ENCODE measurements at regions of chr9 and their contacts with region 1.

Region 1: DNA sequence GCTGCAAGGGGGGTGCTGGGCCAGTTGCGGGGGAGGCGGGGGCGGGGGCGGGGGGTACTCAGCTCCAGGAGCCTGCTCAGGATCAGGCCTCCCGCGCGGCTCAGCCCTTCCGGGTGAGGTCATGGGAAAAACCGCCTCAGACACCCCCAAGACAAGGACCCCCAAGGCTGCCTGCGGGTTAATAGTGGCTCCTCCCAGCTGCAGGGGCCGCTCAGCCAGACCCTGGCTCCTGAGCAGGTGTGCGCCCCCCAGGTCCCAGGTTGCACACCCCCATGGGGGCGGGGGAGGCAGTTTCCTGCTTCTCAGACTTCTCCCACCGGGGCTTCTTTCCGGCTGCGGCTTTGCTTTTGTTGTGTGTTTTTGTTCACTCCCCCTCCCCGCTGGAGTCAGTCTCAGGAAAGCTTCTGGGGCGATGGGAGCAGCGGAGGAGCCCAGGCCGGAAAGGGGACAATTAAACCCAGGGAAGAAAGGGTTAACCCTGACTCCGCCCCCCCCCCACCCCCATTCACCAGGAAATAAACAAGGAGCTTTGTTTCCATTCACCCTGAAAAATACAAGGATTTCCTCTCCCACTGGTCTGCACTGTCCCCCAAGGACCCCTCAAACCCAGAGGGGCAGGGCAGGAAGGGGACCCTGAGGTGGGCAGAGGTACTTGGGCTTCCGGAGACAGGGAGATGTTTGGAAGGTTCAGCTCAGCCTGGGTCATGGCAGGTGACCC is 42.3 kb upstream of the NOTCH1 start:
- DNase-seq: peak; percentile 15
- H3K4me3 ChIP-seq: no peak overlapping the region
- H3K27ac ChIP-seq: no peak overlapping the region
- H3K4me1 ChIP-seq: peaks cover 14% of the 10 kb centered on the region
- H3K27me3 ChIP-seq: no peaks in the 10 kb centered on the region
- CTCF ChIP-seq: no peak
- POLR2A ChIP-seq: no peak

Region 2: DNA sequence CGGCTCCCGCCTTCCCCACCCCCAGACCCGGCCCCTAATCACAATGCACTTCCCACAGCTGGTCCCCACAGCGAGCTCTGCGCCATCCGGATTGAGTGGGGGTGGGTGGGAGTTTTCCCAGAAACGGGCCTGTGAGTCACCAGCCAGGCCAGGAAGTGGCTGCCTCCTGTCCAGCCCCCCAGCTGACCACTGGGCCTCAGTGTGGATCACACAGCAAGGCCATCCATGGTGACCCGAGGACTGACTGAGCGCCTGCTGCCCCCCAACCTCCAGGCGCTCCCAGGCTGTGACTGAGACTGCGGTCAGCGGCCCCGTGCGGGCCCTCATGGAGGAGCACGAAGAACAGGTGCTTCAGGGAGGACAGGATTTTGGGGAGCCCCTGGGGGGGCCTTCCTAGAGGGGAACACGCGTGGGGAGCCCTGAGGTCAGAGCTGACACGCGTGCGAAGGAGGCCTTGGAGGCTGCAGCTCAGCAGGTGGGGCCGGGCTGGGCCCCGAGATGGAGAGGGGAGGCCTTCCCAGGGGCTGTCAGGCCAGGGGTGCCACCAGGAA is 26.3 kb after region 1 on chr9:
- CTCF ChIA-PET with region 1: no interaction called
- POLR2A ChIA-PET with region 1: no interaction called
- dilution Hi-C with region 1: no loop called
- intact Hi-C with region 1: loop called (anchors 2 kb)
- DNase-seq: peak; percentile 94
- H3K4me3 ChIP-seq: no peak overlapping the region
- H3K27ac ChIP-seq: peak overlapping the region; percentile 97
- H3K4me1 ChIP-seq: peaks cover 22% of the 10 kb centered on the region
- H3K27me3 ChIP-seq: no peaks in the 10 kb centered on the region
- CTCF ChIP-seq: no peak
- POLR2A ChIP-seq: no peak

Measured in endothelial cell of umbilical vein (primary cell).